ENCODE measurements at regions of chr2 and their contacts with region 1.

Region 1: DNA sequence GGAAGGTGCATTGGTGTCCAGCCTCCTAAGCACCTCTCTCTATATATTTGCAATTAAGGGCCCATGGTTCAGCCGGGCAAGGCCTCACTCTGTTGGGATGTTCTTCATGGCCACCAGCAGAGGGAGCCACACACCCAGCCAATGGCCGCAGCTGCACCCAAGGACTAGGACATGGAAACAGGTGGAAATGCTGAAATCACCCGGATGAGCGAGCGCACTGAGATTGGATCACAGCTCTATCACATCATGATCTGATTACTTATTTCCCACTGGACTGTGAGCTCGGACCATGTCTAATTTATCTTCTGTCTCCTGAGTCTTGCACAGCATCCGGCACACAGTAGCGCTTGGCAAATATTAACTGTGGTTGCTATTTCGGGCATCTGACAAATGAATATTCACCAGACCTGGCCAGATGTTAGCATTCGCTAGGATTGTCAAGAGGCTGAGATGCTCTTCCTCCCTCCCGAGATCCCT is 31.2 kb downstream of the KIF3C start:
- DNase-seq: peak; percentile 53 to 87 (median 62)
- ATAC-seq: peak; percentile 90
- H3K4me3 ChIP-seq: no peak overlapping the region
- H3K4me3 Mint-ChIP-seq: no peak overlapping the region
- H3K27ac ChIP-seq: no peak overlapping the region
- H3K27ac Mint-ChIP-seq: no peak overlapping the region
- H3K4me1 ChIP-seq: no peaks in the 10 kb centered on the region
- H3K4me1 Mint-ChIP-seq: no peaks in the 10 kb centered on the region
- H3K27me3 ChIP-seq: no peaks in the 10 kb centered on the region
- H3K27me3 Mint-ChIP-seq: no peaks in the 10 kb centered on the region
- CTCF ChIP-seq: peak; percentile 95

Region 2: DNA sequence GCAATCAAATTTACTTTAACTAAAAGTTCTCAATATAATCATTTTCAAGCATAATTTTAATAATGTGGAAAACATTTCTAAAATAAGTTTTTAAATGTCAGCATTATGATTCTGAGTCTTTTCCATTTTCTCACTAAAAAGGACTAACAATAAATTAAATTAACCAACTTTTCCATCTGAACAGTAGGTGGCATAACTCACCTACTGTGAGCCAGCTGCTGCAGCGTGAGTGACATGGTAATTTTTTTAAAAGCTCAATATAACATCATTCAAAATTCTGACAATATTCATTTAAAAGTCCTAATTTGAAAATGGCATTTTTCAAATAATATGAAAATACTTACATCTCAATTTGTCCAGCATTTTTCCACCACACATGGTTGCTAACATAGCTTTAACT is 344.2 kb before region 1 on chr2:
- CTCF ChIA-PET with region 1: interaction called, 3 read pairs
- POLR2A ChIA-PET with region 1: no interaction called
- intact Hi-C with region 1: loop called in 1 of 2 experiments (anchors 10 kb)
- DNase-seq: peak in 4 of 14 experiments; percentile 17 to 57 (median 49)
- ATAC-seq: peak; percentile 44
- H3K4me3 ChIP-seq: no peak overlapping the region
- H3K4me3 Mint-ChIP-seq: no peak overlapping the region
- H3K27ac ChIP-seq: no peak overlapping the region
- H3K27ac Mint-ChIP-seq: no peak overlapping the region
- H3K4me1 ChIP-seq: no peaks in the 10 kb centered on the region
- H3K4me1 Mint-ChIP-seq: peaks cover 3% of the 10 kb centered on the region
- H3K27me3 ChIP-seq: no peaks in the 10 kb centered on the region
- H3K27me3 Mint-ChIP-seq: no peaks in the 10 kb centered on the region
- CTCF ChIP-seq: peak; percentile 69

Region 3: DNA sequence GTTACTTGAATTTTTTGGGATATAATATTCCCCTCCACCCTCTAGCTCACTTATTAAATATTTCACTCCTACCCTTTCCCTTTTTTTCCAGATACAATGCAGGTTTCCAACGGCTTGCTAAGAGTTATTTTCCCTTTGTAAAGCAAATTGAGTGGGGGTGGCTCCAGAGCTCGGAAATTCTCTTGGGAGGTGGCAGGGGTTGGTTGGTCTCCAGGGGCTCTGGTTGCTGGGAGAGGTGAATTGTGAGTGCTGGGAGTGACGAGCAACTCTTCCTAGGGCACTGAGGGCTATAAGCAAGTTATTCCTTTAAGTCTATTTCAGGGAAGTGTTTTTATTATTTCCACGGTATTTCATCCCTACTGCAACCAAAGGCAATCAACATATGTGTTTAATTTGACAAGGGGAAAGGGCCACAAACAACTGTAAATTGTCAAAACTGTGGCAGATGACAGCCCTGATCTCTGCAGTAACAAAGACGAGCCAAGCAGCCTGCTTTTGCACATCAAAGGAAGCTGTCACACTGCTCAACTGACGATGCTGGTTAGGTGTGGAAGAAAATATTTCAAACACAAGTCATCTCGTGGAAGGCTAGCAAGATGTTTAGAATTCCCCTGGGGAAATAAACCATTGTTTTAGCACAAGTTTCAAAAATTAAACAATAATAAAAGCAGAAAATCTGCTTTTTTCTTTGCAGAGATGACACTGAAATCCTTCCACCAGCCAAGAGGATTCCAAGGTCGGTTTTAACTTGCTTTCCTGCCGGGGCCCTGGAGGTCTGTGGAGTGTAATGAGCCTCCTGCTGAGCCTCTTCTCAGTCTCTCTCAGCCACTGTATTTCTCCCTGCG is 38.0 kb before region 1 on chr2:
- CTCF ChIA-PET with region 1: no interaction called
- POLR2A ChIA-PET with region 1: no interaction called
- intact Hi-C with region 1: no loop called
- DNase-seq: no peak
- ATAC-seq: peak; percentile 56
- H3K4me3 ChIP-seq: no peak overlapping the region
- H3K4me3 Mint-ChIP-seq: no peak overlapping the region
- H3K27ac ChIP-seq: no peak overlapping the region
- H3K27ac Mint-ChIP-seq: no peak overlapping the region
- H3K4me1 ChIP-seq: peaks cover 10% of the 10 kb centered on the region
- H3K4me1 Mint-ChIP-seq: peaks cover 24% of the 10 kb centered on the region
- H3K27me3 ChIP-seq: no peaks in the 10 kb centered on the region
- H3K27me3 Mint-ChIP-seq: no peaks in the 10 kb centered on the region
- CTCF ChIP-seq: no peak

Region 4: DNA sequence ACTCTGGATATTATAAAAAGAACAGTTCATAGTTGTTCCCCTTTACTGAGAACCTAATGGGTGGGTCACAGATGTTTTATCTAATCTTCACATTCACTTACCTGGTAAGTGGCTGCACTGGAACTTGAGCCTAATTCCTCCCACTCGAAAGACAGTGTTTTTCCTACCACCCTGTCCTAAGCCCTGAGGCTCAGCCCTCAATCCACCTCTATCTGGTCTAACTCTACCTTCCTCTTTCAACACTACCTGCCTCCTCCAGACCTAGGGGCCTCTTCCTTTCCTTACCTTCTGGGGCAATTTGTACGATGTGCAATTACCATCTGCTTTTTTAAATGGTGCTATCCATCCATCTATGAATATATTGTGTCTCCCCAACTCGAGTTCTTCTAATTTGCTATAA is 40.9 kb after region 1 on chr2:
- CTCF ChIA-PET with region 1: interaction called, 5 read pairs
- POLR2A ChIA-PET with region 1: no interaction called
- intact Hi-C with region 1: loop called in 1 of 2 experiments (anchors 2 kb)
- DNase-seq: no peak
- ATAC-seq: peak; percentile 13
- H3K4me3 ChIP-seq: no peak overlapping the region
- H3K4me3 Mint-ChIP-seq: no peak overlapping the region
- H3K27ac ChIP-seq: no peak overlapping the region
- H3K27ac Mint-ChIP-seq: peak overlapping the region; percentile 1
- H3K4me1 ChIP-seq: peaks cover 9% of the 10 kb centered on the region
- H3K4me1 Mint-ChIP-seq: peaks cover 8% of the 10 kb centered on the region
- H3K27me3 ChIP-seq: no peaks in the 10 kb centered on the region
- H3K27me3 Mint-ChIP-seq: no peaks in the 10 kb centered on the region
- CTCF ChIP-seq: no peak

Region 5: GRCh38 chr2:26144953-26145680 is 194.0 kb after region 1 on chr2:
- CTCF ChIA-PET with region 1: interaction called, 5 read pairs
- POLR2A ChIA-PET with region 1: no interaction called
- intact Hi-C with region 1: loop called (anchors 1 kb)
- DNase-seq: peak; percentile 31 to 77 (median 50)
- ATAC-seq: peak; percentile 80
- H3K4me3 ChIP-seq: no peak overlapping the region
- H3K4me3 Mint-ChIP-seq: no peak overlapping the region
- H3K27ac ChIP-seq: no peak overlapping the region
- H3K27ac Mint-ChIP-seq: no peak overlapping the region
- H3K4me1 ChIP-seq: no peaks in the 10 kb centered on the region
- H3K4me1 Mint-ChIP-seq: no peaks in the 10 kb centered on the region
- H3K27me3 ChIP-seq: peaks cover 3 to 10% of the 10 kb centered on the region in 2 experiments
- H3K27me3 Mint-ChIP-seq: peaks cover 11% of the 10 kb centered on the region
- CTCF ChIP-seq: peak; percentile 76

Region 6: GRCh38 chr2:26577434-26578112 is 626.5 kb after region 1 on chr2:
- CTCF ChIA-PET with region 1: interaction called, 7 read pairs
- POLR2A ChIA-PET with region 1: no interaction called
- intact Hi-C with region 1: loop called (anchors 1 to 2 kb)
- DNase-seq: peak; percentile 26 to 76 (median 55)
- ATAC-seq: peak; percentile 93
- H3K4me3 ChIP-seq: no peak overlapping the region
- H3K4me3 Mint-ChIP-seq: no peak overlapping the region
- H3K27ac ChIP-seq: no peak overlapping the region
- H3K27ac Mint-ChIP-seq: no peak overlapping the region
- H3K4me1 ChIP-seq: peaks cover 4% of the 10 kb centered on the region
- H3K4me1 Mint-ChIP-seq: no peaks in the 10 kb centered on the region
- H3K27me3 ChIP-seq: peaks cover 9 to 10% of the 10 kb centered on the region in 2 experiments
- H3K27me3 Mint-ChIP-seq: peaks cover 30% of the 10 kb centered on the region
- CTCF ChIP-seq: peak; percentile 98

Region 7: DNA sequence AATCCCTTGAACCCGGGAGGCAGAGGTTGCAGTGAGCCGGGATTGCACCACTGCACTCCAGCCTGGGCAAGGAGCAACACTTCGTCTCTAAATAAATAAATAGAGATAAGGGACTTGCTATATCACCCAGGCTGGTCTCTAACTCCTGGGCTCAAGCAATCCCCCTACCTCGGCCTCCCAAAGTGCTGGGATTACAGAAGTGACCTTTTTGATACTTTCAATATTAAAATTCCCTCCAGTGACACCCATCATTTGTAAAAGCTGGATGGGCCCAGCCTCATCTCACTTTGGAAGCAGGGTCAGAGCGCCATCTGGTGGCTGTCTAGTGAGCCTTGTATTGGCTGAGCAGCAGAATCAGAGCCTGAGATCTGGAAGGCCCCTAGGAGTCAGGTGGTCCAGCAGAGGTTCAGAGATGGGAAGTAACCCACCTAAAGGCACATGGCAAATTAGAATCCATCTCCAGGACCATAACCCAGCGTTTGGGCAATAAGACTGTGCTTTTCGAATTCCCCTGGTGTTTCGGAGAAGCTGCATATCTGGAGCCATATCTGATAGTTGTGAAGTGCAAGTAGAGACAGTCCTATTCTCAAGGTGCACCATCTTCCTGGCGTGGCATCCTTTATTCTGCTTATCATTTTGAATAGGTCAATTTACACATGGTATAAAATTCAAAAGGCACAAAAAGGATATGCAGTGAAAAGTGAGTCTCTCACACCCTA is 794.7 kb after region 1 on chr2:
- CTCF ChIA-PET with region 1: no interaction called
- POLR2A ChIA-PET with region 1: no interaction called
- intact Hi-C with region 1: loop called in 1 of 2 experiments (anchors 5 kb)
- DNase-seq: peak; percentile 61 to 87 (median 72)
- ATAC-seq: peak; percentile 78
- H3K4me3 ChIP-seq: no peak overlapping the region
- H3K4me3 Mint-ChIP-seq: no peak overlapping the region
- H3K27ac ChIP-seq: no peak overlapping the region
- H3K27ac Mint-ChIP-seq: no peak overlapping the region
- H3K4me1 ChIP-seq: no peaks in the 10 kb centered on the region
- H3K4me1 Mint-ChIP-seq: peaks cover 4% of the 10 kb centered on the region
- H3K27me3 ChIP-seq: no peaks in the 10 kb centered on the region
- H3K27me3 Mint-ChIP-seq: no peaks in the 10 kb centered on the region
- CTCF ChIP-seq: peak; percentile 93